PC-3 (cell line): ENCODE measurements at regions of chr6 and their contacts with region 1.

Region 1: GRCh38 chr6:24283043-24283985 is 74.5 kb downstream of the DCDC2 start:
- DNase-seq: peak; percentile 84
- ATAC-seq: peak; percentile 99
- H3K4me3 ChIP-seq: peak overlapping the region; percentile 53
- H3K27ac ChIP-seq: no peak overlapping the region
- H3K4me1 ChIP-seq: peaks cover 7% of the 10 kb centered on the region
- H3K27me3 ChIP-seq: peaks cover 22% of the 10 kb centered on the region
- CTCF ChIP-seq: peak; percentile 97

Region 2: DNA sequence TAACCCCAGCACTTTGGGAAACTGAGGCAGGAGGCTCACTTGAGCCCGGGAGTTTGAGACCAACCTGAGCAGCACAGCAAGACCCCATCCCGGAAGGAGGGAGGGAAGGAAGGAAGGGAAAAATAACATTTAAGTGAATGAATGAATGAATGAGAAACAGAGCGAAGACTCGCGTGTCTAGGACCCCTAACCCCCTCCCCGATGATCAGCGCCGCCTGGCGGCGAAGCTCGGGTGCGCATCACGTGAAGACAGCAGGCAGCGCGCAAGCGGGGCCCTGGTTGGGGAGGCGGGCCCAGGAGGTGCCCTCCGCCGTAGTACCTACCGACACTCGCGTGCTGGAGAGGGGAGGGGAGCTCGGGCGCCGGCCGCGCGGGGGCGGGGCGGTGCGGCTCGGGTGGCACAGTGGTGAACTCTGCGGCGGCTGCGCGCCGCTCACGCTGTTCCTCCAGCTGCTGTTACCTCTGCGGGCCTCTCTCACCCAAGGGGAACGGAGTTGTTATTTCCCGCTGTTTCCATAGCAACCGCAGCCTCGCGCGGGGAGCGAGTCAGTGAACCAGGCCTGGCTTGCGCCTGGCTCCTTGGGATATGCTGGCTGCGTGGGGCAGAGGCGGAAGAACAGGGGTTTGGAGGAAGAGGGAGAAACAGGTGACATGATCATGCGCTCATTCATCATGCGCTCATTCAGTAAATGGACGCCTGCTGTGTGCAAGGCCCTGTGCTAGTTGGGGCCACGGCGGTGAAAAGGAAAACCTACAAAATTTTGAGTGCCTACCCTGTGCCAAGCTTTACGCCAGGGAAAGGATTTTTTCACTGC is 76.5 kb after region 1 on chr6:
- CTCF ChIA-PET with region 1: interaction called, 13 read pairs
- POLR2A ChIA-PET with region 1: no interaction called
- intact Hi-C with region 1: no loop called
- DNase-seq: peak; percentile 93
- ATAC-seq: peak; percentile 98
- H3K4me3 ChIP-seq: peak overlapping the region; percentile 69
- H3K27ac ChIP-seq: peak overlapping the region; percentile 7; the same call in 1 of the 2 replicates
- H3K4me1 ChIP-seq: peaks cover 8% of the 10 kb centered on the region
- H3K27me3 ChIP-seq: no peaks in the 10 kb centered on the region
- CTCF ChIP-seq: peak; percentile 92

Region 3: GRCh38 chr6:24385536-24386269 is 102.4 kb after region 1 on chr6:
- CTCF ChIA-PET with region 1: interaction called, 51 read pairs
- POLR2A ChIA-PET with region 1: no interaction called
- intact Hi-C with region 1: loop called (anchors 1 kb)
- DNase-seq: no peak
- ATAC-seq: no peak
- H3K4me3 ChIP-seq: no peak overlapping the region
- H3K27ac ChIP-seq: no peak overlapping the region
- H3K4me1 ChIP-seq: peaks cover 18% of the 10 kb centered on the region
- H3K27me3 ChIP-seq: no peaks in the 10 kb centered on the region
- CTCF ChIP-seq: no peak

Region 4: DNA sequence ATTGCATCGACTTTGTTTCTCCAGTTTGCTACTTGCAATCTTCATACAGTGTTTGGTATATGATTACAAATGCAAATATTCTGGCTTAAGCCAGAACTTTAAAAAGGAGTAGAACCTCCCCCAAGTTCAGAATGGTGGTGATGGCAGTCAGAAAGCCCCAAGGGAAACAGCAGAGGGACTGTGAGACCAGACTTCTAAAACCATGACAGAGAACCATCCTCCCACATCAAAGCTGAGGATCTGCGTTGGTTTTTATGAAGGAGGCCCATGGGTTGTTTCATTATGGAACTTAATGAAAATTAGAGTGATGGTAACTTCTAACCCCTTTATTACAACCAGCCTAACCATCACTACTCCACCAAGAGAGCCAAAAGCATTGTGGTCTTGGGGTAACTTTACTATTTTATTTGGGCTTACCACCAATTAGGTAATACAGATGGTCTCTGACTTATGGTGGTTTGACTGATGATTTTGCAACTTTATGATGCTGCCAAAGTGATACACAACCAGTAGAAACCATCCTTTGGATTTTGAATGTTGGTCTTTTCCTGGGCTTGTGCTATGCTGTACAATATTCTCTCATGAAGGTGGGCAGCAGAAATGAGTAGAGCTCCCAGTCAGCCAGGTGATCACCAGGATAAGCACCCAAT is 108.6 kb after region 1 on chr6:
- CTCF ChIA-PET with region 1: interaction called, 51 read pairs
- POLR2A ChIA-PET with region 1: no interaction called
- intact Hi-C with region 1: loop called (anchors 1 kb)
- DNase-seq: no peak
- ATAC-seq: no peak
- H3K4me3 ChIP-seq: no peak overlapping the region
- H3K27ac ChIP-seq: no peak overlapping the region
- H3K4me1 ChIP-seq: peaks cover 8% of the 10 kb centered on the region
- H3K27me3 ChIP-seq: no peaks in the 10 kb centered on the region
- CTCF ChIP-seq: no peak

Region 5: GRCh38 chr6:24425091-24425490 is 141.8 kb after region 1 on chr6:
- CTCF ChIA-PET with region 1: interaction called, 4 read pairs
- POLR2A ChIA-PET with region 1: no interaction called
- intact Hi-C with region 1: loop called (anchors 1 kb)
- DNase-seq: peak; percentile 75
- ATAC-seq: peak; percentile 51
- H3K4me3 ChIP-seq: no peak overlapping the region
- H3K27ac ChIP-seq: peak overlapping the region; percentile 19
- H3K4me1 ChIP-seq: peaks cover 53% of the 10 kb centered on the region
- H3K27me3 ChIP-seq: no peaks in the 10 kb centered on the region
- CTCF ChIP-seq: no peak

Region 6: GRCh38 chr6:24547243-24547642 is 263.9 kb after region 1 on chr6:
- CTCF ChIA-PET with region 1: no interaction called
- POLR2A ChIA-PET with region 1: no interaction called
- intact Hi-C with region 1: no loop called
- DNase-seq: no peak
- ATAC-seq: peak; percentile 24; the same call in 1 of the 2 replicates
- H3K4me3 ChIP-seq: no peak overlapping the region
- H3K27ac ChIP-seq: no peak overlapping the region
- H3K4me1 ChIP-seq: no peaks in the 10 kb centered on the region
- H3K27me3 ChIP-seq: no peaks in the 10 kb centered on the region
- CTCF ChIP-seq: no peak

Region 7: DNA sequence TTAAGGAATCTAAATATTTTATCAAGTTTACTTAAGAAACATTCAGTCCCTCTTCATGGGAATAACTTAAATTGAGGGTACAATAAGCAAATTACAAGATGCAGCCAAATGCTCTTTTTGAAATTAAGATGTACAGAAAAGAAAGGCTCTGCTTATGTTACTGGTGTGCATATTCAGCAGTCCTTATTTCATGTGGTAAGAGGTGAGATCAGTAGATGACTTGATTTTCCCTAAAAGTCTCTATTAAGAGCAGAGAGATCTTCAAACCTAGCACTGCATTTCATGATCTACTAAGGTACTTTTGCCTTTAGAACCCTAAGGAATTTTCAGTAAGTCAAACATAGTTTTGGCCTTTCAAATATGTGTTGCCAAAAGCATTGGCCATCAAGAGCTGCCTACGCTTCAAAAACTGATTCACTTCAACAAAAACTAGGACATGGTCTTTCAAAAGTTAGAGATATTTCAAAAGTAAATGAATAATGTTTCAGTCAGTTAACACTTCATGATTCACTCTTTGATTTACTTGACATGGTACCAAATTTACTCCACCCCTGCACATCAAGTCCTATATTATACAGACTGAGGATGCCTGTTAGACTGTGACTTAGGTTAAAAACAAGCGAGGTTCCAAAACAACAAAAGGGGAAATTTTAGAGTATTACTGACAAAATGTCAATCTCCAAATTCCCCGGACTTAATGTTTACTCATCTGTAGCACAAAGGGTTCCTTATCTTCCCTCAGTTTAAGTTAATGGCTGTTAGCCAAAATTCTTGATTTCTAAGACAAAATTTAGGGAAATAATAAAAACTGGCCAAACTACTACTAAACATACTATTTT is 416.4 kb after region 1 on chr6:
- CTCF ChIA-PET with region 1: no interaction called
- POLR2A ChIA-PET with region 1: no interaction called
- intact Hi-C with region 1: loop called (anchors 5 kb)
- DNase-seq: no peak
- ATAC-seq: no peak
- H3K4me3 ChIP-seq: no peak overlapping the region
- H3K27ac ChIP-seq: no peak overlapping the region
- H3K4me1 ChIP-seq: no peaks in the 10 kb centered on the region
- H3K27me3 ChIP-seq: no peaks in the 10 kb centered on the region
- CTCF ChIP-seq: no peak